Naive thymus-derived CD4-positive, alpha-beta T cell (primary cell): ENCODE measurements at regions of chr1 and their contacts with region 1.

Region 1: GRCh38 chr1:222617367-222617951 is 438 bp upstream of the MIA3 start:
- DNase-seq: peak; percentile 81 to 98 (median 89)
- ATAC-seq: peak; percentile 93
- H3K4me3 ChIP-seq: peak overlapping the region; percentile 74
- H3K4me3 Mint-ChIP-seq: peak overlapping the region; percentile 89 to 95 (median 93)
- H3K27ac ChIP-seq: peak overlapping the region; percentile 74
- H3K27ac Mint-ChIP-seq: peak overlapping the region; percentile 90 to 97 (median 95)
- H3K4me1 ChIP-seq: peaks cover 18 to 22% of the 10 kb centered on the region in 2 donors
- H3K4me1 Mint-ChIP-seq: peaks cover 14 to 39% (median 32%) of the 10 kb centered on the region in 7 donors
- H3K27me3 ChIP-seq: no peaks in the 10 kb centered on the region
- H3K27me3 Mint-ChIP-seq: peaks cover 5 to 51% (median 26%) of the 10 kb centered on the region in 5 donors

Region 2: DNA sequence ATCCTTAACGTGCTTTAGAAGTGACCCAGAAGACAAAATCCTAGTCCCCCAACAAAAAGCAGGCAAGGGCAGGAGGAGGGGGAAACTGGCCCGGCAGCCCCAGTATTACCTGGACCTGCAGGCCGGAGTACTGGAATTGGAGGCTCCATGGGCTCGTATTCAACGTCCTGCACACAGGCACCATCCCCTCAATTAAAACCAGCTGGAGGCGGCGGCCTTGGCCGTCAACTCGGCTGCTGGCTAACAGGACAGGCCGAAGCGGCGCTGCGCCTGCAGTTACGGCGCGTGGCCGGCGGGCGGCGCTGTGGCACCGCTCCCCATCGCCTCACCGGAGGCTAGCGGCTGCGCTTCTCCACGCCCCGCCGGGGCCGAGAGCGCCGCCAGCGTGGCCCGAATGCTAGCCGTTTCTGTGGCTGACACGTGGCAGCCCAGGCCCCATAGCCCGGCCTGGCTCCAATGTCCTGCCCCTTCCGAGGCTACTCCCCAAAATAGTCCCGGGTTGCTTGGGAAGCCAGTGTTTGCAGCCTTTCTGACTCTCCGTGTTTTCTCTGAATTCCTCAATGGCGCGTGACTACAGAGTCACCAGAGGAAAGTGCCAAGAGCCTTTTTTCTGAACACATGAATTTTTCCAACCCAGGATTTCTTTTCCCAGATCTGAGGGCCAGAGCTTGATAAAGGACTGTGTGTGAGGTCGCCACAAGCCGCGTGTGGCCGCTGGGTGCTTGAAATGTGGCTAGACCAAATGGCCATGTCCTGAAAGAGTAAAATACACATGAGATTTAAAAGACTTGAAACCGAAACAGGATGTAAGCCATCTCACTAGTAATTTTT is 152.0 kb before region 1 on chr1:
- CTCF ChIA-PET with region 1: interaction called, 3 read pairs
- POLR2A ChIA-PET with region 1: no interaction called
- intact Hi-C with region 1: loop called (anchors 1 kb)
- DNase-seq: peak; percentile 57 to 89 (median 84)
- ATAC-seq: peak; percentile 99
- H3K4me3 ChIP-seq: peak overlapping the region; percentile 86
- H3K4me3 Mint-ChIP-seq: peak overlapping the region; percentile 79 to 92 (median 86)
- H3K27ac ChIP-seq: peak overlapping the region; percentile 64
- H3K27ac Mint-ChIP-seq: peak overlapping the region; percentile 80 to 96 (median 90)
- H3K4me1 ChIP-seq: peaks cover 5 to 6% of the 10 kb centered on the region in 2 donors
- H3K4me1 Mint-ChIP-seq: peaks cover 11 to 25% (median 13%) of the 10 kb centered on the region in 7 donors
- H3K27me3 ChIP-seq: no peaks in the 10 kb centered on the region
- H3K27me3 Mint-ChIP-seq: peaks cover 0 to 18% (median 0%) of the 10 kb centered on the region in 5 donors

Region 3: DNA sequence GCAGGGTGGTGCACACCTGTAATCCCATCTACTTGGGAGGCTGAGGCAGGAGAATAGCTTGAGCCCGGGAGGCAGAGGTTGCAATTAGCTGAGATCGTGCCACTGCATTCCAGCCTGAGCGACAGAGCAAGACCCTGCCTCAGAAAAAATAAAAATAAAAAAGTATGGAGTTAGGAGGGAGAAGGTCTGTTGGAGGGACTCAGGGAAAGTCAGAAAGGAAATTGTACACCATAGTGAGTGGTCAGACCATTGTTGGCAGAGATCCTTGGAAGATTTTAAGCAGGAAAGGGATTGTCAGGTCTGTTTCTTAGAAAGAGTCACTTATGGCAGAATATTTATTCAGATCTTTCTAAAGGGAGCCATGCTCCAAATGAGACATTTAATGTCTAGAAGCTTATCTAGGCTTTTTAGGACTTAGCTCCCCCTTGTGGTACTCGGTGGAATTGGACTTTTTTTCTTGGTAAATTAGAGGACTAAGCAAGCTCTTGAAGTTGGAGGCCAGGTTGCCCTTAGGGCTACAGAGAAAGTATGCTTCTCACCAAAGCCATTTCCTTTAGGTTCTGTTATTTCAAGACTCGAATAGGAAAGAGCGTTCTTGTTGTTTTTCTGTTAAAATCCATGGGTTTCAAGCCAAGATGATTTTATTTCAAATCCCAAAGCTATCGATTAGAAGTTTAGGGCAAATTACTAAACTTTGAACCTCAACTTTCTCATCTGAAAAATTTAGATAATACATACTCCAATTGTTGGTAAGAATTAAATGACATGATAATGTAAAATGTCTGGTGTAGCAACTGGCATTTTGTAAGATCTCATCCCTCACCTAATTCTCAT is 16.9 kb after region 1 on chr1:
- CTCF ChIA-PET with region 1: interaction called, 12 read pairs
- POLR2A ChIA-PET with region 1: no interaction called
- intact Hi-C with region 1: loop called (anchors 1 kb)
- DNase-seq: peak in 8 of 9 donors; percentile 43 to 83 (median 78)
- ATAC-seq: peak; percentile 96
- H3K4me3 ChIP-seq: no peak overlapping the region
- H3K4me3 Mint-ChIP-seq: no peak overlapping the region
- H3K27ac ChIP-seq: no peak overlapping the region
- H3K27ac Mint-ChIP-seq: peak overlapping the region in 6 of 9 donors; percentile 11 to 82 (median 58)
- H3K4me1 ChIP-seq: no peaks in the 10 kb centered on the region
- H3K4me1 Mint-ChIP-seq: peaks cover 7 to 20% (median 11%) of the 10 kb centered on the region in 7 donors
- H3K27me3 ChIP-seq: no peaks in the 10 kb centered on the region
- H3K27me3 Mint-ChIP-seq: no peaks in the 10 kb centered on the region

Region 4: DNA sequence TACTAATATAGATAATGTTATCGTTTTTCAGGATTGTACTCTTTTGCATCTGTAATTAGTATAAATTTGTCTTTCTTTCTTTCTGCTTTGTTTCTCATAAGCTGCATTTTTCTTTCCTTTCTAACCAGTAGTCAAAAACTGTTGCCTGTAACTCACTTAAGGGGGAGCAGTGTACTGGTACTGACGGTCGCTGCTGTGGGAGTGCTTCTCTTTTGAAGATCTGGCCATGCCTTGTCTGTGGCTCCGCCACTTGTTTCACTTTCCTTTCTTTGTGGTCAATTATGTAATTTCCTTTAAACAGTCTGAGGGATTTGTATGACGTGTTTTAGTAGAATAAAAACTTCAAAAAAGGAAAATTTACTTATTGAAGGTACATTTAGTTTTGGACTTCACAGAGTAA is 37.4 kb after region 1 on chr1:
- CTCF ChIA-PET with region 1: no interaction called
- POLR2A ChIA-PET with region 1: interaction called, 3 read pairs
- intact Hi-C with region 1: loop called in 1 of 2 experiments (anchors 1 kb)
- DNase-seq: peak in 8 of 9 donors; percentile 62 to 89 (median 83)
- ATAC-seq: peak; percentile 99
- H3K4me3 ChIP-seq: peak overlapping the region; percentile 21
- H3K4me3 Mint-ChIP-seq: peak overlapping the region; percentile 38 to 81 (median 70)
- H3K27ac ChIP-seq: peak overlapping the region; percentile 82
- H3K27ac Mint-ChIP-seq: peak overlapping the region; percentile 85 to 96 (median 94)
- H3K4me1 ChIP-seq: peaks cover 25 to 33% of the 10 kb centered on the region in 2 donors
- H3K4me1 Mint-ChIP-seq: peaks cover 34 to 67% (median 60%) of the 10 kb centered on the region in 7 donors
- H3K27me3 ChIP-seq: no peaks in the 10 kb centered on the region
- H3K27me3 Mint-ChIP-seq: no peaks in the 10 kb centered on the region

Region 5: DNA sequence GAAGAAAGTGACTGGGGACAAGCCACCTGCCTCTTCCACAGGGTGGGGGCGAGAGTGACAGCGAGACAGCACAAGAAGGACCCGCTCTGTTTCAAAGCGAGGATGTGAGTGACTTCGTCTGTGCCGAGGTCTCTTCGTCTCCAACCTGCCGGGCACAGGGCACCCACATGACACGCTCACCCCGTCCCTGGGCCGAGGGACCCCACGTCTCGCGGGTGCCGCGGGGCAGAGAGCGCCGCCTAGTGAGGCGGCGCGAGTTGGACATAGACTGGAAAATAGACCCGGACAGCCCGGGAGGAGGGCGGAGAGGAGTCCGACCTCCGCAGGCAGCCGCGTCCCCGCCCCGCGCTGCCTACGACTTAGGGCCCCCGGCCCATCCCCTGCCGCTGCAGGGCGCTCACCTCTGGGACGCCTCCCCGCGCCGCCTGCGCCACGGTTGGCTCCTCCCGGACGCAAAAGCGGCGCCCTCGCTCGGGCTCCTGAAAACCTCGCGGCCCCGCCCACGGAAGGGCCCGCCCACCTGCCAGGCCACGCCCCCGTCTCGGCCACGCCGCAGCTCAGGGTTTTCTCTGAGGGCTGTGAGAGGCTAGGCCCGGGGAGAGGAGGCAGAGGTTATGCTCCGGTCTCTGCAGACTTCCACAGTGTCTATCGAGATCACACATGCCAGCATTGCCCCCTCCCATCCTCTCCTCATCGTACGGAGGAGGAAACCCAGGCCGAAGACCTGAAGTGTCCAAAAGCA is 525.5 kb after region 1 on chr1 and contains the start of gene TLR5:
- CTCF ChIA-PET with region 1: no interaction called
- POLR2A ChIA-PET with region 1: no interaction called
- intact Hi-C with region 1: loop called (anchors 1 to 5 kb)
- DNase-seq: peak; percentile 81 to 92 (median 87)
- ATAC-seq: peak; percentile 94
- H3K4me3 ChIP-seq: peak within 1 kb of the TSS; percentile 65
- H3K4me3 Mint-ChIP-seq: peak within 1 kb of the TSS; percentile 69 to 89 (median 81)
- H3K27ac ChIP-seq: peak within 1 kb of the TSS; percentile 69
- H3K27ac Mint-ChIP-seq: peak within 1 kb of the TSS in 8 of 9 donors; percentile 48 to 95 (median 90)
- H3K4me1 ChIP-seq: peaks cover 13 to 15% of the 10 kb centered on the region in 2 donors
- H3K4me1 Mint-ChIP-seq: peaks cover 13 to 35% (median 27%) of the 10 kb centered on the region in 7 donors
- H3K27me3 ChIP-seq: no peaks in the 10 kb centered on the region
- H3K27me3 Mint-ChIP-seq: peaks cover 0 to 10% (median 0%) of the 10 kb centered on the region in 5 donors
- total RNA-seq, gene TLR5: 3.1 to 8.0 (median 6.6) TPM in 4 of 5 experiments, not detected in the other